ENCODE measurements at regions of chr9 and their contacts with region 1.

Region 1: DNA sequence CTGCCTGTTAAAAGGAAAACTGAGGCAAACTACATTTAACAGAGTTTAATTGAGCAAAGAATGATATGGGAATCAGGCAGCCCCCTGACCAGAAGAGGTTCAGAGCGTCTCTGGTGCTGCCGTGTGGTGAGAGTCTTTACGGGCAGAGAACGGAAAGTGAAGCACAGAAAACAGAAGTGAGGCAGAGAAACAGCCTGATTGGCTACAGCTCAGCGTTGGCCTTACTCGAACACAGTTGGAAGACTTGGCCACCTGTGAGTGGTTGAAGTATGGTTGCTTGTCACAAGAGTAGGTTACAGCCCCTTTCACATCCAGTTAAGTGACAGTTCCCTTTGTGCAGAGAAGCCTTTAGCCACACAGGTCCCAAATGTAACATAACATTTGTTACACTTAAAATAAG is 16.9 kb upstream of the FBP1 start:
- DNase-seq: peak; percentile 69
- CTCF ChIP-seq: no peak

Region 2: DNA sequence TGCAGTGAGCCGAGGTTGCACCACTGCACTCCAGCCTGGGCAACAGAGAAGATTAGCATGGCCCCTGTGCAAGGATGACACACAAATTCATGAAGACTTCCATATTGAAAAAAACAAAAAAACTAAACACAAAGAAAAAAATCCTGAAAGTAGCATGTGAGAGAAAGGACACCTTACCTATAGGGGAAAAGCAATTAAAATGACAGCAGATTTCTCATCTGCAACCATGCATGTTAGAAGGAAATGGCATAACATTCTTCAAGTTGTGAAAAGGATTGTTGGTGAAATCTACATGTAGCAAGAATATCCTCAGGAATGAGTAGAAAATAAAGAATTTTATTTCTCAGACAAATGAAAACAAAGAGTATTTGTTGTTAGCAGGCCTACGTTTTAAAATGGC is 410.5 kb before region 1 on chr9:
- CTCF ChIA-PET with region 1: no interaction called
- POLR2A ChIA-PET with region 1: no interaction called
- DNase-seq: no peak
- CTCF ChIP-seq: no peak

Region 3: DNA sequence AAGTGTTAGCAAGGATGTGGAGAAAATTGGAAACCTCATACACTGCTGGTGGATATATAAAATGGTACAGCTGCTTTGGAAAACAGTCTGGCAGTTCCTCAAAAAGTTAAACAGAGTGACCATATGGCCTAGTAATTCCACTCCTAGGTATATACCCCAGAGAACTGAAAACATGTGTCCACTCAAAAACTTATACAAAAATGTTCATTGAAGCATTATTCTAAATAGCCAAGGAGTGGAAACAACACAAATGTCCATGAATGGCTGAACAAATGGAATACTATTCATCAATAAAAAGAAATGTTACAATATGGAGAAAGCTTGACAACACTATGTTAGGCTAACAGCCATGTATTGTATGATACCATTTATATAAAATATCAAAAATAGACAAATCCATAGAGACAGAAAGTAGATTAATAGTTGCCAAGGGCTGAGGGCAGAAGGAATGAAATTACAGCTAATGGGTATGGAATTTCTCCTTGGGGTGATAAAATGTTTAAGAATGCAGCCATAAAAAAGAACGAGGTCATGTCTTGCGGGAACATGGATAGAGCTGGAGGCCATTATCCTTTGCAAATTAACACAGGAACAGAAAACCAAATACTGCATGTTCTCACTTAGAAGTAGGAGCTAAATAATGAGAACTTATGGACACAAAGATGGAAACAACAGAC is 16.7 kb after region 1 on chr9:
- CTCF ChIA-PET with region 1: interaction called, 28 read pairs
- POLR2A ChIA-PET with region 1: no interaction called
- DNase-seq: no peak
- CTCF ChIP-seq: no peak

Measured in GM10248 (cell line).